K562 (cell line): ENCODE measurements at regions of chr2 and their contacts with region 1.

Region 1: GRCh38 chr2:130181325-130181879 is at the start of gene SMPD4:
- DNase-seq: peak; percentile 73 to 97 (median 83)
- ATAC-seq: peak; percentile 77
- H3K4me3 ChIP-seq: peak within 1 kb of the TSS; percentile 100
- H3K27ac ChIP-seq: peak within 1 kb of the TSS; percentile 97
- H3K4me1 ChIP-seq: peaks cover 7 to 45% of the 10 kb centered on the region in 2 experiments; a peak in 4 of 5 replicates
- H3K27me3 ChIP-seq: no peaks in the 10 kb centered on the region
- CTCF ChIP-seq: 0 out of 6 replicates have a peak, but pooled peaks of 1 of the 3 experiments have one; percentile 10
- EP300 ChIP-seq: no peak
- POLR2A ChIP-seq: peak; percentile 73
- RAD21 ChIP-seq: no peak
- polyA plus RNA-seq, gene SMPD4: 7.5 to 8.8 TPM

Region 2: DNA sequence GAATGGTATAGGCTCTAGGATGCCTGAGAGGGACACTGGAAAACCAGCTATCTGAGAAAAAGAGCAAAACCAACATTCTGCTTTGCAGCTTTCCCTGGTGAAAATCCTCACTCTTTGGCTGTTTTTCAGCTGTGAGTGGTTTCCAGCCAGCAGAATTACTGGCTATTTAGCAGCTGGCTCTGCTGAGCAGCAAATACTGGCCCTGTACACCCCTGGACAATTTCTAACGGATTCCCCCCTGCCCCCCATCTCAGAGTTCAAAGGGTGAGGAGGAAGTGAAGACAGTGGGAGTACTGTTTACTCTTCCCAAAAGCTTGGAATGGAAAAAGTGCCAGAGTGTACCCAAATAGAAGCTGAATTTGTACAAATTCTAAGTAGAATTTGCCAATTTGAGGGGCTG is 135.2 kb after region 1 on chr2:
- CTCF ChIA-PET with region 1: no interaction called
- POLR2A ChIA-PET with region 1: no interaction called
- in situ Hi-C with region 1: no loop called
- intact Hi-C with region 1: no loop called
- DNase-seq: no peak
- ATAC-seq: no peak
- H3K4me3 ChIP-seq: no peak overlapping the region
- H3K27ac ChIP-seq: no peak overlapping the region
- H3K4me1 ChIP-seq: peaks cover 0 to 7% of the 10 kb centered on the region in 2 experiments; a peak in 2 of 5 replicates
- H3K27me3 ChIP-seq: peaks cover 5 to 38% of the 10 kb centered on the region in 2 experiments; a peak in 3 of 5 replicates
- CTCF ChIP-seq: no peak
- EP300 ChIP-seq: no peak
- POLR2A ChIP-seq: no peak
- RAD21 ChIP-seq: no peak

Region 3: DNA sequence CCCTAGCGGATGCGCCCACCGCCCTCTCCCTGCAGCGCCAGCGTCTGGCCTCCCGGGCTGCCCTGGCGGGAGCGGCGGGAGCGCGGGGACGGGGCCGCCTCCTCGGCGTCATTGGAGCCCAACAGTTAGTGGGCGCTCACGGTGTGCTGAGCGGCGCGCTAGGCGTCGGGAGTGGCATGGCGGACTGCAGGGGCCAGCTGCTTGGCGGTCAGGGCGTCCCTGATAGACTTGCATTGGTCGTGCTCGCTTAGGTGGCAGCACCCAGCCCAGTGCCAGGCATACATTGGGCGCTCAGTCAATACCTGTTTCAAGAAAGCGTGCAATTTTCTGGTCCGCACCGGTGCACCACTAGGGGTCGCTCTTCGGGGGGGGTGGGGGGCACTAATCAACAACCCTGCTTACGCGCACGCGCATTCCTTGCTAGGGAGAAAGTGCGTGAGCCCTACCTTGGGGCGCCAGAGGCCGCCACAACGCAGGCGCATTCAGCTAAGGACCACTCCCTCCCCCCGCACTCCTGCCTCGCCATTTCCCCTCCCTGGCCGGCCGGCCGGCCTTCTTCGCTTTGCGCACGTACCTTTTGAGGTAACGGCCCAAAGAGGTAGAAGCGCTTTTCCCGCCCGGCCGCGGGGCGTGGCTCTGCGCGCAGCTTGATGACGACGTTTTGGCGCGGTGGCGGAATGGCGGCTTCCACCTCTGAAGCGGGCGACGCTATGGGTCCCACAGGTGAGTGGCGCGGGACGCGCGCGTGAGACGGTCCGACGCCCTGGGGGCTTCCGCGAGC is 1311.2 kb after region 1 on chr2:
- CTCF ChIA-PET with region 1: no interaction called
- POLR2A ChIA-PET with region 1: interaction called, 7 read pairs
- in situ Hi-C with region 1: no loop called
- intact Hi-C with region 1: loop called (anchors 10 kb)
- DNase-seq: peak; percentile 93 to 100 (median 96)
- ATAC-seq: peak; percentile 89
- H3K4me3 ChIP-seq: peak overlapping the region; percentile 99
- H3K27ac ChIP-seq: peak overlapping the region; percentile 98
- H3K4me1 ChIP-seq: peaks cover 6 to 39% of the 10 kb centered on the region in 2 experiments; a peak in 4 of 5 replicates
- H3K27me3 ChIP-seq: no peaks in the 10 kb centered on the region
- CTCF ChIP-seq: peak; percentile 69 to 95 (median 87)
- EP300 ChIP-seq: no peak
- POLR2A ChIP-seq: peak; percentile 72
- RAD21 ChIP-seq: peak in 1 of 2 experiments; percentile 33; a peak in 2 of 4 replicates